ENCODE measurements at regions of chr2 and their contacts with region 1.

Region 1: DNA sequence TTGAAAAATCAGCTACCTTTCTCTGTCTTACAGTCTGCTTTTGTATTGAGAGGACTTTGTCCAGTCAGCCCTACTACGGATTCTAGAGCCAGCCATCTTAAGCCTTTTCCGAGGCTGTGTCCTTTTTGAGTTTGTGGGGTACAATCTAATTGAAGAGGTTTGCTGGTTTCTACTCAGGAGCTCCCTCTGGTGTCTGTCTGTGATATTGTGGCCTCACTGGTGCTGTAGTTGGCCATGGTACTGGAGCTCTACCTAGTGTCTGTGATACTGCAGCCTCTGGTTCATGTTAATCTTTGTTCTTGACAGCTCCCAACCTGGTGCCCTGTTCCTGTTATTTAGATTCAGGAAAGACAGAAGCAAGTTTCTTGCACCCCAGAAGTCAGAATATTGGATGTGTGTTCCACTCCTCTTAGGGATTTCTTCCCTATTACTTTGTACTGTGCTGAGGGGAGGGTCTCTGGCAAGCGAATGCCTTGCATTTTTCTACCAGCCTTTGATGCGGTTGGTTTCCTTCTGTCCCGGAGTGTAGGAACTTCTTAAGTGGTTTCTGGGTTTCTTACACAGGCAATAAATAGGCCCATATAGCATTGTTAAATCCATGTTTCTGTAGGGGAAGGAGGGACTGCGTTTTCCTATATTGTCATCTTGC is 78.5 kb downstream of the ACSL3 start:
- DNase-seq: peak; percentile 82
- H3K4me3 Mint-ChIP-seq: no peak overlapping the region
- H3K27ac Mint-ChIP-seq: no peak overlapping the region
- H3K4me1 Mint-ChIP-seq: peaks cover 13% of the 10 kb centered on the region
- H3K27me3 Mint-ChIP-seq: no peaks in the 10 kb centered on the region

Region 2: GRCh38 chr2:222690564-222691200 is 248.7 kb before region 1 on chr2:
- CTCF ChIA-PET with region 1: interaction called, 11 read pairs
- intact Hi-C with region 1: loop called (anchors 1 kb)
- DNase-seq: peak; percentile 84
- H3K4me3 Mint-ChIP-seq: no peak overlapping the region
- H3K27ac Mint-ChIP-seq: no peak overlapping the region
- H3K4me1 Mint-ChIP-seq: peaks cover 8% of the 10 kb centered on the region
- H3K27me3 Mint-ChIP-seq: no peaks in the 10 kb centered on the region

Region 3: DNA sequence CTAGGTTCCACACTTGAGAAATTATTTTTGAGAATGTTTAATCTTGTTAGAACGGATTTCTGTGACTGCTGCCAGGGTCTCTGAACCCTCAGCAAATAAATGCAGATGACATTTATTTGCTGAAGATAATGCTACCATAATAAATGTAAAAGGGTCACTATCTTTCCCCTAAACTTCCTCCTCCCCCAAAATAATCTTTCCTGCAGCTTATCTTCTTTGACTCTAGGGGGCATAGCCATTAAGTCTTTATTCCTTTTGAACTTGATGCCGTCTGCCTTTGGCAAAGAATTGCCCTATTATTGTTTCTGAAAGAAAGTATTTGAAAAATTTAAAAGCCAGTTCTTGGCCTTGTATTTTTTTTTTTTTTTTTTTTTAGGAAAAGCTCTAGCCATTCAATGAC is 142.1 kb before region 1 on chr2:
- CTCF ChIA-PET with region 1: no interaction called
- intact Hi-C with region 1: loop called (anchors 1 kb)
- DNase-seq: no peak
- H3K4me3 Mint-ChIP-seq: no peak overlapping the region
- H3K27ac Mint-ChIP-seq: no peak overlapping the region
- H3K4me1 Mint-ChIP-seq: no peaks in the 10 kb centered on the region
- H3K27me3 Mint-ChIP-seq: no peaks in the 10 kb centered on the region

Region 4: DNA sequence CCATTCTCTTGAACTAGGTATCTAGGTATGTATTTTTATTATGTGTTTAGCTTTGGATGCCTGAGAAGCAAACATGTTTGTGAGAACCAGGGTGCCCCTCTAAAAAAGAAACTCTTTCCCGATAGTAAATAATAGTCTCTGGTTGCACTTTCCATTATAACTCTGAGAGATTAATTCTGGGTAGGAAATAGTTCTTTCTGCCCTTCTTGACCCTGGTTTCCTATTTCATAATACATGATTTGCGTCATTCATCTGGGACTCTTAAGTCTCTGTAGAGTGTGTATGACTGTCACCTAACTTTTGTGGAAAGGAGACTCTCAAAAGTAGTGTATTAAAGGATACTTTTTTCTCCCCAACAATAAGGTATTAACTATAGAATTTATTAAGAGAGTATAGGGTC is 47.0 kb before region 1 on chr2:
- CTCF ChIA-PET with region 1: no interaction called
- intact Hi-C with region 1: no loop called
- DNase-seq: no peak
- H3K4me3 Mint-ChIP-seq: no peak overlapping the region
- H3K27ac Mint-ChIP-seq: no peak overlapping the region
- H3K4me1 Mint-ChIP-seq: peaks cover 32% of the 10 kb centered on the region
- H3K27me3 Mint-ChIP-seq: no peaks in the 10 kb centered on the region

Region 5: DNA sequence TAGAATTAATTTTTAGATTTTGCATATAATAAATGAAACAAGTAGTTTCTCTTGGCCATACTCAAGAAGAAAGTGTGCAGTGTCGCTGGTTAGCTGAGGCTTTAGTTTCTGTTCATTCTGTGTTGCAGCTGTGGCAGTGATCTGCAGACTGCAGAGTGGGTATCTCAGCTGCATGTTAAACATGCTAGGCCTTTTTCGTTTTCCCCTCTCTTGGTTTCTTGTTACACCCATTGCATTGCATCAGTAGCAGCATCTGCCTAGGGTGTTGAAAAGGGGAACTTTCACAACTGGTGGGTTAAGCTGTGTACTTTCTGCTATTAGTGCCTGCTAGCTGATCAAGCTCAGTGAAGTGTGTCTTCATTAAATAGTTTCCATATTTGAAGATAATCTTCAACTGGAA is 27.2 kb before region 1 on chr2:
- CTCF ChIA-PET with region 1: interaction called, 5 read pairs
- intact Hi-C with region 1: loop called (anchors 2 kb)
- DNase-seq: peak; percentile 28
- H3K4me3 Mint-ChIP-seq: no peak overlapping the region
- H3K27ac Mint-ChIP-seq: no peak overlapping the region
- H3K4me1 Mint-ChIP-seq: peaks cover 40% of the 10 kb centered on the region
- H3K27me3 Mint-ChIP-seq: no peaks in the 10 kb centered on the region

Measured in activated naive CD4-positive, alpha-beta T cell treated with anti-CD3 and anti-CD28 coated beads for 36 hours (primary cell).